Psoas muscle (tissue), 8 donors: ENCODE measurements at regions of chr12 and their contacts with region 1.

Region 1: DNA sequence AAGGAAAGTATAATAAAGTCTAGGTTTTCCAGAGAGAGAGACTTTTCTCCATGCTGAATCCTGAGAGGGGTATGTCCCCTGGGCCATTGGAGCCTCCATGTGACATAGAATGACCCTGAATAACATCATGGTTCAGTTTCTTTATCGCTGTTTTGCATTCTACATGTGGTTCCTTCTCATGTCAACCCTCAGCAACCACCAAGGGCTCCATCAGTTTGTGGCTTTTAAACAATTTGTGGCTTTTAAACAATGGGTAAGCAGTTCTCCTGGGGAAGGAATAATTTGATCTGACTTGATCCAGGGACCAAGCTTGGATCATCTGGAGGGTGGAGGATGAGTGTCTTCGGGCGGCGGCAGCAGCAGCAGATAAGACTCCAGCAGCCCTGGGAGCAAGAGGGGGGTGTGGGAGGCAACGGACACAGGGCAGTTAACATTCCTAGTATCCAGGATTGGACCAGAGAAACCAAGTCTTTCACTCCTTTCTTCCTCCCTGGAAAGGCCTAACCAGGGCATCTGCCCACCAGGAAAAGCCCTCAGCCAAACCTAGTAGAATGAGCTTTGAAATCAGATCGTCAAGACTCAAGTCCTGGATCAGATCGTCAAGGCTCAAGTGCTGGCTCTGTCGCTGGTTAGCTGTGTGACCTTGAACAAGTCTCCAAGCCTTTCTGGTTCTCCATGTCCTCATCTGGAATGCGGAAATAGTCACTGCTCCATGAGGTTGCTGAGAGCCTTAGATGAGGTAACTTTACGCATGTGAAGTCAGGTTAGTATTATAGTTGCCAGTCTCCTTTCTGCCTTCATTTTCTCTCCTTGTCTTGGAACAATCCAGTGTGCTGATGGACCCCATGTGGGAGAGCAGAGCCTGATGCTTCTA is 27.8 kb upstream of the FAM222A start:
- DNase-seq: no peak
- ATAC-seq: no peak
- H3K4me3 ChIP-seq: no peak overlapping the region
- H3K27ac ChIP-seq: no peak overlapping the region
- H3K4me1 ChIP-seq: no peaks in the 10 kb centered on the region
- H3K27me3 ChIP-seq: no peaks in the 10 kb centered on the region
- CTCF ChIP-seq: no peak

Region 2: DNA sequence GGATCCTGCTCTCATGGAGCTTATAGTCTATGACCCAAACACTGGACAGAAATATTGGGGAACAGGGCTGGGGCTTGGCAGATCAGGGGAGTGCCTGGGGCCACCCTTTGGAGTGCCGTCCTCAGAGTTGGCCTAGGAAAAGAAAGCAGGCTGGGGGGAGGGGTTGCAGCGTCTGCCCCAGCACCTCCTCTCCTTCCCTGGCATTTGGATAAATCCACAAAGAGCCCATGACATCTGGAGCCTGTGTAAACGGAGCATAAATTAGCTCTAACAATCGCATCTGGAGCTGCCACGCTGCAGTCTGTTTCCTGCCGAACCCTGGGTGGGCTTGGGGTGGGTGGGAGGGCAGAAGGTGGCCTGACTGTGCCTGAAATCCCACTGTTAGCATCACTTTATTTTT is 48.5 kb before region 1 on chr12:
- intact Hi-C with region 1: loop called in 1 of 2 experiments (anchors 5 kb)
- DNase-seq: no peak
- ATAC-seq: no peak
- H3K4me3 ChIP-seq: no peak overlapping the region
- H3K27ac ChIP-seq: no peak overlapping the region
- H3K4me1 ChIP-seq: no peaks in the 10 kb centered on the region
- H3K27me3 ChIP-seq: peaks cover 0 to 2% (median 0%) of the 10 kb centered on the region in 3 donors
- CTCF ChIP-seq: no peak